A673 (cell line): ENCODE measurements at regions of chr7 and their contacts with region 1.

Region 1: DNA sequence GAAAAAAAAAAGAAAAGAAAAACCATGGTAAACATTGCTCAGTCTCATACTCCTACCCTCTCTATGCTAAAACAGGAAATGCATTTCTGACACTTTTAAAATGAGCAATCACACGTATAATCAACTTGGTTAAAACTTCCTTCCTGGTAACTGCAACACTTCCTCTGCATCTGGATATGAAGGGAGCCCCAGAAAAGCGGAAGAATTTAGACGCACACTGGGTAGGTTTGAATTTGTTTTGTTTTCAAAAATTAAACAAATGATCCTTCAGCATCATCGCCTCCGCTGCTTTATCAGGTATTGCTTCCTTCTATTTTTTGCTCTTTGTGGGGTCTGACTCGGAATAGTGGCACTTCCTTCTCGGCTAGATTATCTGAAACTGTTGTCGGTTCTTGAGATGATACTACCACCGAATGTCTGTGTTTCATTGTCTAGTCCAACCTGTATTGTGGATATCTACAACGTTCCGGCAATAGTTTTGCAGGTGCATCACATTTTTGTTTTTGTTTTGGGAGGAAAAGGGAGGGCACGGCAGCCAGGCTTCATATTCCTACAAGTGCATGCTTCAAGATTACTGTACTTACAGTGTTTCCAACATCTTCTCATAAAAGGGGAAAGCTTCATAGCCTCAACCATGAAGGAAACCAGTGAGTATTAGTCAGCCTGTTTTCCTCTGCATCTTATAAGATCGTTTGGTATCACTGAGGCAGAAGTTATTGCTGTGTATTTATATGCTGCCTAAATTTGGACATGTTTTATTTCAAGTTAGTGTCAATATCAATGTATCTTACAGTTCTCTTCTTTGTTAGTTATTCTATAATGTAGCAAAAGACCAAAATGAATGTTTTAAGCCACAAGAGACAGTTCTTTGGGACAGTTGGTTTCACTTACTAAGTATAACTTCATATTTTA is at the start of gene PIK3CG:
- DNase-seq: peak; percentile 77
- H3K4me3 ChIP-seq: peak within 1 kb of the TSS; percentile 57
- H3K27ac ChIP-seq: peak within 1 kb of the TSS; percentile 66
- H3K4me1 ChIP-seq: peaks cover 35% of the 10 kb centered on the region
- H3K27me3 ChIP-seq: no peaks in the 10 kb centered on the region
- CTCF ChIP-seq: no peak
- total RNA-seq, gene PIK3CG: 13.4 and 13.7 TPM in 2 replicates

Region 2: GRCh38 chr7:106840342-106840741 is 25.0 kb before region 1 on chr7:
- CTCF ChIA-PET with region 1: no interaction called
- POLR2A ChIA-PET with region 1: no interaction called
- intact Hi-C with region 1: loop called (anchors 1 kb)
- DNase-seq: peak; percentile 87
- H3K4me3 ChIP-seq: no peak overlapping the region
- H3K27ac ChIP-seq: no peak overlapping the region
- H3K4me1 ChIP-seq: peaks cover 24% of the 10 kb centered on the region
- H3K27me3 ChIP-seq: no peaks in the 10 kb centered on the region
- CTCF ChIP-seq: no peak